Pancreas (tissue), 10 donors: ENCODE measurements at regions of chr20 and their contacts with region 1.

Region 1: DNA sequence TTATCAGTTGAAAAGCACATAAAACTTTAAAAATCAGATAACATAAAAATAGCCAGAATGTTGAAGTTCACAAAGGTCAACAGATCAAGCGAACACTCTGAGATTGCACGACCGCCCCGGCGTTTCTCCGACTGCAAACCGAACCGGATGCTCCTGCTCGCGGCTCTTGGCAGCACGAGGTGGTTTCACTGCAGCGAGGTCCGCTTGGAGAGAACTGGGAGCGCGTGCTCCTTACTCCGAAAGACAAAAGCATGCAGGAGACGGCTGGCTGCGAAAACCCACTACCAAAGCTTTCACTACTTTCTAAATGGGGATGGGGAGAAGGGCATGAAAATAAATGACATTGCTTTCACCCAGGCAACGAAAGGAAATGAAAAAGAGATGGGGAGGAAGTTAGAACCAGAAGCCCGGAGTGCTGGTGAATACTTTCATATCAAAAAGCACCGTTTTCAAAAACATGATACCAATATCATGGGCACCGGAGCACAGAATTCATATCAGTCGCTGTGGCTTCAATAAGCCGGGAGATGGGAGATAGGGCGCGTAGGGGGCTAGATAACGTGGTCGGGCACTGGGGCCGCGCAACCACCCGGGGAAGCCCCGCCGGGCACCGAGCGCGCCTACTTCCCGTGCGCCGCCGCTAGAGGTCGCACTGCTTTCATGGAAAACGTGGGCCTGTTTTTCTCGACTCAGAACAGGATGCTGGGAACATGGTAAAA is 8.3 kb upstream of the ANKRD60 start:
- DNase-seq: peak; percentile 26 to 94 (median 66)
- ATAC-seq: peak; percentile 84 to 98 (median 96)
- H3K4me3 ChIP-seq: peak overlapping the region in 2 of 4 donors; percentile 15 to 44
- H3K27ac ChIP-seq: no peak overlapping the region
- H3K4me1 ChIP-seq: no peaks in the 10 kb centered on the region
- H3K27me3 ChIP-seq: no peaks in the 10 kb centered on the region
- CTCF ChIP-seq: peak; percentile 92 to 98 (median 93)

Region 2: DNA sequence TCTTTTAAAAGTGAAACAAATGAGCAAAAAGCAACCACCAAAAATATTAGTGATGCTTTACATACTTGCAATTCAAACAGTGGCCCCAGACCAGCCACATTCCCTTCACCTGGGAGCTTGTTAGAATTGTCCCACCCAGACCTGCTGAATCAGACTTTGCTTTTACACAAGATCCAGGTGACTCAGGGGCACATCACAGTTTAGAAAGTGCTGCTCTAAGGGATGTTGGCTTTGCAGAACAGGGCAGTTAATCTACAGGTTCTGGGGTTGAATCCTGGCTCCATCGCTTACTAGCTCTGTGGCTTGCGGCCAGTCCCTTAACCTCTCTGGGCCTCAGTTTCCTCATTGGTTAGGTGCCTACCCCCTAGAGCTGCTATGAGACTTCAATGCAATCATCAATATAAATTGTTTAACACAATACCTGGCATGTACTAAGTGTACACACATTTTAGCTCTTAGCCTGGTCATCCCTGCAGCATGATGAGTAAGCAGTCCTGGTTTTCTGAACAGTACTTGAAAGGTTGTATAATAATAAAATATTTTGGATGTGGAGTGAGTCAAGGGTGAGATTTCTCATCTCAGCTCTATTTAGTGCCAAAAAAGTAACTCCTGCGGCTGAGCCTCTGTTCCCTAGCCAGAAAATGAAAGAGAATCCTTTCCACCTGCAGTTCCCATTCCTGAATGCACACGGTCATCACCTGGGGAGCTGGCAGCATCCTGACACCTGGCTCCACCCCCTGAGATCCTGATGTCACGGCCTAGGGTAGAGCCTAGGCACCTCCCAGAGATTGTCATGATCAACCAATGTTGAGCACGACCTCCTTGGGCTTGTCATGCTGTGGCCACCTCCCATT is 171.0 kb before region 1 on chr20:
- intact Hi-C with region 1: no loop called
- DNase-seq: peak in 1 of 6 donors; percentile 9
- ATAC-seq: no peak
- H3K4me3 ChIP-seq: no peak overlapping the region
- H3K27ac ChIP-seq: no peak overlapping the region
- H3K4me1 ChIP-seq: no peaks in the 10 kb centered on the region
- H3K27me3 ChIP-seq: no peaks in the 10 kb centered on the region
- CTCF ChIP-seq: no peak

Region 3: GRCh38 chr20:58447511-58448391 is 211.0 kb after region 1 on chr20:
- intact Hi-C with region 1: loop called in 2 of 3 experiments (anchors 5 to 10 kb)
- DNase-seq: peak in 2 of 6 donors; percentile 23 to 48
- ATAC-seq: peak; percentile 73 to 90 (median 87)
- H3K4me3 ChIP-seq: no peak overlapping the region
- H3K27ac ChIP-seq: no peak overlapping the region
- H3K4me1 ChIP-seq: no peaks in the 10 kb centered on the region
- H3K27me3 ChIP-seq: no peaks in the 10 kb centered on the region
- CTCF ChIP-seq: peak; percentile 28 to 34 (median 32)